ENCODE measurements at regions of chr6 and their contacts with region 1.

Region 1: DNA sequence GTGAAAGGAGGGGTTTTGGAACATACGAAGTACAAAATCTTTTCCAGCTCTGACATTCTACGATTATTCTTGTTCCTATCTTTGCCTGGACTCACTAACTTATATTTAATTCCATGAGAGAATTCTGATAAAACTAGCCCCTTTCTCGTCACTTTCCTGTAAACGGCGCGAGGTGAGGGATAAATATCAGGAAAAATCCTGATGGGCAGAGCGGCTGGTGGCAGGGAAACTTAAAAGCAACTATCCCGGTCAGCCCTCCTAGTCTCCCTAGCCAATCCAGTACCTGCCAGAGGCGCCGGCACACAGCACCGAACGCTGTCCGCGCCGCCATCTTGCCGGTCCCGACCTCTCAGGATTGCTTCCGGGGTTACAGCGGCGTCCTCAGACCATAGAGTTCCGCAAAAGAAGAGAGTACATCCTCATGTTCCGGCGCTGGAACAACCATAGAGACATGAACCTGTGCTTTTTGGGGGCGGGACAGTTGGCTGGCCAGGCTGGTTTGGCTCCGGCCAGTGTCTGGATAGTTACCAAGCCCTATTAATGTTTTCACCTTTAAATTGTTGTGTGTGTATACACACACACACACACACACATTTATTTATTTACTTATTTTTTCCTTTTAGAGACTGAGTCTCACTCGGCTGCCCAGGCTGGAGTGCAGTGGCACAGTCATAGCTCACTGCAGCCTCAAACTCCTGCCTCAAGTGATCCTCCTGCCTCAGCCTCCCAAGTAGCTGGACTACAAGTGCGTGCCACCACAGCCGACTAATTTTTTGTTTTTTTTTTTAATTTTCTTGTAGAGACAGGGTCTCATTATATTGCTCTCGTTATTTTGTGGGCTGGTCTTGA is at the start of gene MRPS10:
- DNase-seq: peak; percentile 67
- H3K4me3 ChIP-seq: peak within 1 kb of the TSS; percentile 64 to 77 (median 69)
- H3K27ac ChIP-seq: peak within 1 kb of the TSS; percentile 83 to 93 (median 88)
- H3K4me1 ChIP-seq: peaks cover 10 to 72% (median 22%) of the 10 kb centered on the region in 3 donors
- H3K27me3 ChIP-seq: no peaks in the 10 kb centered on the region
- CTCF ChIP-seq: no peak
- POLR2A ChIP-seq: peak in 3 of 4 donors; percentile 28 to 81 (median 70)
- total RNA-seq, gene MRPS10: 40.3 to 70.3 (median 46.2) TPM

Region 2: DNA sequence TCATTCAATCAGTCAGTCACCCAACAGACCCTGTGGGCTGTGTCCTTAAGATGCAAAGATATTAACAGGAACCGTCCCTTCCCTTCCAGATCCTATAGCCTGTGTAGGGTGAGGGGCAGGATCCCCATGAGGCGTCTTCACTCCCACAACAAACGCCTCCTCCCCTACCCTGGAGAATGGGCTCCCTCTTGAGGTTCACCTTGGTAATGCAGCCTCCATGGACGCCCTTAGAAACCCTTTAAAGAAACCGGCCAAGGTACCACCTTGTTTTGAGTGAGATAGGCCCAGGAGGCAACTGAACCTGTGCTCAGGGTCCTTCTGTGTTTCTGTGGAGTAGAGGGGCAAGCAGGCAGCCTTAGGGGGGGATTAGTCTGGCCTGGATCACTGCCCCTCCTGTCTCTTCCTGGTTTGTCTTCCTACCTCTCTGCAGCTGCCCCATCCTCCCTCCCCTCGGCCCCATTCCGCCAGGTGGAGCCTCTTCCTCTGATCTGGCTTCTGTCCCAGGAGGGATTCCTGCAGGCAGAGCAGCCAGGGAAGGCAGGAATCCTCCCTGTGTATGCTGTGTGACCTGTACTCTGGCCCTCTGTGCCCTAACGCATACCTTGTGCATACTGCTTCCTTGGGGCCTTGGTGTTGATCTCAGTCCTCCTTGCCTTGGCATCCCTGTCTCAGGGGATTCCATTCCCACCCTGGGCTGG is 51.1 kb before region 1 on chr6:
- intact Hi-C with region 1: loop called (anchors 10 kb)
- DNase-seq: no peak
- H3K4me3 ChIP-seq: no peak overlapping the region
- H3K27ac ChIP-seq: peak overlapping the region in 2 of 4 donors; percentile 39 to 44
- H3K4me1 ChIP-seq: peaks cover 0 to 17% (median 0%) of the 10 kb centered on the region in 3 donors
- H3K27me3 ChIP-seq: no peaks in the 10 kb centered on the region
- CTCF ChIP-seq: peak; percentile 82 to 97 (median 96)
- POLR2A ChIP-seq: no peak

Measured in esophagus squamous epithelium (tissue), 5 donors.